MCF 10A (cell line): ENCODE measurements at regions of chr6 and their contacts with region 1.

Region 1: GRCh38 chr6:119442776-119443184 is 93.2 kb upstream of the MAN1A1 start:
- DNase-seq: no peak
- H3K4me3 Mint-ChIP-seq: no peak overlapping the region
- H3K27ac Mint-ChIP-seq: no peak overlapping the region
- H3K4me1 Mint-ChIP-seq: peaks cover 25% of the 10 kb centered on the region
- H3K27me3 Mint-ChIP-seq: no peaks in the 10 kb centered on the region
- CTCF ChIP-seq: no peak

Region 2: GRCh38 chr6:119423996-119424395 is 18.8 kb before region 1 on chr6:
- CTCF ChIA-PET with region 1: no interaction called
- POLR2A ChIA-PET with region 1: no interaction called
- intact Hi-C with region 1: no loop called
- DNase-seq: no peak
- H3K4me3 Mint-ChIP-seq: no peak overlapping the region
- H3K27ac Mint-ChIP-seq: no peak overlapping the region
- H3K4me1 Mint-ChIP-seq: no peaks in the 10 kb centered on the region
- H3K27me3 Mint-ChIP-seq: no peaks in the 10 kb centered on the region
- CTCF ChIP-seq: no peak

Region 3: DNA sequence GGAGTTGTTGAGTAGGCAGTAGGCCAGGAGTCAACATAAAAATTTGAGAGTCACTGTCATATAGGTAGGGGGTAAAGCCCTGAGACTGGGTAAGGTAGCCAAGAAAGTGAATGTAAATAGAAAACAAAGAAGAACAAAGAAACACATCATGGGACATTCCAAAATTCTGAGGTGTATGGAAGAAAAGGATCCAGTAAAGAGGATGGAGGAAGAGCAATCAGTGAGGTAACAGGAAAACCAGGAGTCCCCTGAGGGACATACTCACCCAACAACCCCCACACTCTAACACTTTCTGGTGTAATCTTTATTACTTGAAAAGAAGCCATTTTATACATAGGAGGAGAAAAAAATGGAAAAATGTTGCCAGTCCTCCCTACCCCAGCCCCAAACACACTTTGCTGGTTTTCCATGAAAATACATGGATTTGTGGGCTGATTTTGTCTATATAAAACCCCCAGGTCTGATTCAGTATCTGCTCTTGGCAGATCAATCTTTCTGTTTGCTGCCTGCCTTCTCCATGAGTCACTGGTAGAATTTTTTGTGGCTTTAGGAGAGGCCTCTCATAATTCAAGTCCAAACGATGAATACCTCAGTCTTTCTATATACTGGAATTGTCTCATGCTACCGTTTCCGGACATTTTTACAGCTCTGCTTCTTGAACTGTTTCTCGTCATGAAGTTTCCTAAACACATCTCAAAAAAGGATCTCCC is 178.2 kb after region 1 on chr6:
- CTCF ChIA-PET with region 1: no interaction called
- POLR2A ChIA-PET with region 1: no interaction called
- intact Hi-C with region 1: loop called (anchors 10 kb)
- DNase-seq: peak; percentile 76
- H3K4me3 Mint-ChIP-seq: no peak overlapping the region
- H3K27ac Mint-ChIP-seq: peak overlapping the region; percentile 86
- H3K4me1 Mint-ChIP-seq: peaks cover 17% of the 10 kb centered on the region
- H3K27me3 Mint-ChIP-seq: no peaks in the 10 kb centered on the region
- CTCF ChIP-seq: no peak